Dorsolateral prefrontal cortex (tissue), 120 donors: ENCODE measurements at regions of chr18 and their contacts with region 1.

Region 1: GRCh38 chr18:46756559-46757201 is at the start of gene ST8SIA5:
- DNase-seq: peak in 4 of 10 donors; percentile 48 to 72 (median 60)
- H3K4me3 ChIP-seq: peak within 1 kb of the TSS; percentile 50 to 82 (median 69)
- H3K27ac ChIP-seq: peak within 1 kb of the TSS; percentile 35 to 93 (median 82)
- H3K27me3 ChIP-seq: peaks cover 0 to 10% (median 0%) of the 10 kb centered on the region in 45 donors
- CTCF ChIP-seq: no peak
- total RNA-seq, gene ST8SIA5: 25.8 to 115 (median 77.9) TPM

Region 2: DNA sequence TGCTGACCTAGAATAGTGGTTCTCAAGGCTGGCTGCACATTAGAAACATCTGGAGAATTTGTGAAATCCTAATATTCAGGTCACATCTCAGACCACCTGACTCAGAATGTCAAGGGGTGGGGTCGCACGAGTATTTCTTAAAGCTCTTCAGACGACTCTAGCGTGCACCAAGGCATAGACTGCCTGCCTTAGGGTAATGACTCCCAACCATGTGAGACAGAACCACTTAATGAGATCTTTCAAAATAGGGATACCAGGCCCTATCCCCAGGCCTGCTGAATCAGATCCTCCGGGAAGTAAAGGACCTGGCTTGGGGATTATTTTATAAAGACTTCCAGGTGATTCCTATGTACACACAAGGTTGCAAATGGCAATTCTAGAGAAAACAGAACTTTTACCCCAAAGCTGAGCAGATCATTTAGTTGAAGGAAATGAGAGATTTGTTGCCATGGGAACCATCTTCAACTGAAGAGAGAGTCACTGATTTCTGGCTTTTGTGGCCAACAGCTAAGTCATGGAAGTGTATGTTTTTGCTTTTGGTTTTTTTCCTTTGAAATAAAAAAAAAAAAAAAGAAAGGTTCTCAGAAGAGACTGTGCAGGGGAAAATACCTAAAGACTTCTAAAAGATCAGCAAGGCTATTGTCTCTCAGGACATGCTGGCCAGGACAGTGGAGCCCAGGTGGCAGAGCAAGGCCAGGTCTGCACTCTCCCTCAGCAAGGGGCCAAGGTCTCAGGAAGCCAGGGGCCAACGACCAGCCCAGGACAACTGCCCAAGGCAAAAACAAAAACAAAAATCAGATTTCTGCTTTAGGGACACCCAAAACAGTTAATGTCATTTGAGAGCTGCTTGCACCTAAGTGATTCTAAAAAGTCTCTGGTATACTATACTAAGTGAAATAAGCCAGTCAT is 84.4 kb before region 1 on chr18:
- intact Hi-C with region 1: loop called in 1 of 2 experiments (anchors 5 kb)
- DNase-seq: no peak
- H3K4me3 ChIP-seq: no peak overlapping the region
- H3K27ac ChIP-seq: peak overlapping the region in 25 of 59 donors; percentile 8 to 81 (median 41)
- H3K27me3 ChIP-seq: no peaks in the 10 kb centered on the region
- CTCF ChIP-seq: no peak

Region 3: GRCh38 chr18:46718501-46719341 is 38.0 kb before region 1 on chr18:
- intact Hi-C with region 1: loop called in 1 of 2 experiments (anchors 5 kb)
- DNase-seq: peak in 4 of 10 donors; percentile 33 to 67 (median 60)
- H3K4me3 ChIP-seq: no peak overlapping the region
- H3K27ac ChIP-seq: peak overlapping the region in 43 of 59 donors; percentile 0 to 76 (median 52)
- H3K27me3 ChIP-seq: no peaks in the 10 kb centered on the region
- CTCF ChIP-seq: no peak

Region 4: DNA sequence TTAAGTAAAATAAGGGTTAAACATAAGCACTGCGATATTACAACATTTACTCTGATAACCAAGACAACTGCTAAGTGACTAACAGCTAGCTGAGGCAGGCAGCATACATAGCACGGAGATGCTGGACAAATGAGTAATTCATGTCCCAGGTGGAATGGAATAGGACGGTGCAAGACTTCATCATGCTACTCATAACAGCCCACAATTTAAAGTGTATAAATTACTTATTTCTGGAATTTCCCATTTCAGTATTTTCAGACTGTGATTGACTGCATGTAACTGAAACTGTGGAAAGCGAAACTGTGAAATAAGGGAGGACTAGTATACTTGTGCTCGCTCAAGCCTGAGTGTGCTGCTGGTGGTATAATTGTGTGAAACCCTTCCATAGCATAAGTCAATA is 406.6 kb after region 1 on chr18:
- intact Hi-C with region 1: no loop called
- DNase-seq: no peak
- H3K4me3 ChIP-seq: no peak overlapping the region
- H3K27ac ChIP-seq: no peak overlapping the region
- H3K27me3 ChIP-seq: no peaks in the 10 kb centered on the region
- CTCF ChIP-seq: no peak